ENCODE measurements at regions of chr16 and their contacts with region 1.

Region 1: GRCh38 chr16:51971184-51971583 is 575.8 kb downstream of the TOX3 start:
- DNase-seq: peak; percentile 68
- H3K4me3 ChIP-seq: no peak overlapping the region
- H3K27ac ChIP-seq: no peak overlapping the region
- H3K4me1 ChIP-seq: no peaks in the 10 kb centered on the region; a peak in 1 of 4 replicates
- H3K27me3 ChIP-seq: no peaks in the 10 kb centered on the region
- CTCF ChIP-seq: 0 out of 2 replicates have a peak, but pooled peaks have one; percentile 13
- EP300 ChIP-seq: no peak
- RAD21 ChIP-seq: peak; percentile 81

Region 2: DNA sequence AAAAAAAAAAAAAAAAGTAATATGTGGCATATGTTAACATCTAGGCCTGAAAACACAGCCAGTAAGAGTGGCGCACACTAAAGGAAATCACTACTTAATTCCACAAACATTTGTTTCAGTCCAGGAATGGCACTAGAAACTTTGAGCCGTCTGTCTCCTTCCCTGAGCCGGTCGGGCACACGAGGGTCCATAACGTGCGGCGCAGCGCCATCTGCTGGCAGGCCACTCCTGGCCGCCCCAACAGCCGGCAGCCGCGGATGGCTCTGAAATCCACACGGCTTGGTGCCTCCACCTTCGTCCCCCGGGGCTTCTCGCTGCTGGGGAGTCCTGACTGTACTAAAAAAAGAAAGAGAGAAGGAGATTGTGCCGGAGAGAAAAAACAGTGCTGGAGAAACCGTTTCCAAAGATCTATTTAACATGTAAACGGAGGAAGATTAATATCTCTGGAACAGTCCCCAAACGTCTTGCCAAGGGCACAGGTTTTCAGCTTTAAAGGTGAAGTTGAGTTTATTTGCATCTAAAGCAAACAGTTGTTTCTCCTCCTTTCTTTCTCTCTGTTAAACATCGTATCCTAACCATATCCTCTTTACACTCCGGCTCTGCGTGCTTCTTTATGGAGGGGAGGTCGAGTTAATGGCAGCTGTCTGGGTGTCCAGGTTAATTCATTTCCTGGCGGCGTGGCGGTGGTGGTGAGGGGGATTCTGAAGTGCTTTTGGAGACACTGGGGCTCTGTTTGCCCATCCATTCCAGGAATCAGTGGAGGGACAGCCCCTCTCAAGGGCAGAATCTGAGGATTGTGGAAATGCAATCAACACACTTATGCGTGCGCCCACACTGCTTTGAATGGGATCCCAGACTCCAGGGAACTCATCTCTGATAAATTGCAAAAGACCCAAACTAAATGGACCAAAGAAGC is 208.8 kb before region 1 on chr16:
- CTCF ChIA-PET with region 1: interaction called, 10 read pairs
- POLR2A ChIA-PET with region 1: no interaction called
- DNase-seq: peak; percentile 76
- H3K4me3 ChIP-seq: peak overlapping the region in 1 of 2 experiments; percentile 47; a peak in 1 of 4 replicates
- H3K27ac ChIP-seq: no peak overlapping the region
- H3K4me1 ChIP-seq: peaks cover 3 to 25% of the 10 kb centered on the region in 2 experiments; a peak in 3 of 4 replicates
- H3K27me3 ChIP-seq: no peaks in the 10 kb centered on the region
- CTCF ChIP-seq: peak; percentile 95
- EP300 ChIP-seq: no peak
- RAD21 ChIP-seq: peak; percentile 91

Region 3: GRCh38 chr16:51931653-51932052 is 39.5 kb before region 1 on chr16:
- CTCF ChIA-PET with region 1: interaction called, 11 read pairs
- POLR2A ChIA-PET with region 1: no interaction called
- DNase-seq: peak; percentile 32
- H3K4me3 ChIP-seq: no peak overlapping the region
- H3K27ac ChIP-seq: no peak overlapping the region
- H3K4me1 ChIP-seq: peaks cover 0 to 6% of the 10 kb centered on the region in 2 experiments; a peak in 2 of 4 replicates
- H3K27me3 ChIP-seq: no peaks in the 10 kb centered on the region
- CTCF ChIP-seq: no peak
- EP300 ChIP-seq: peak in 1 of 2 experiments; percentile 38; a peak in 1 of 4 replicates
- RAD21 ChIP-seq: no peak

Region 4: DNA sequence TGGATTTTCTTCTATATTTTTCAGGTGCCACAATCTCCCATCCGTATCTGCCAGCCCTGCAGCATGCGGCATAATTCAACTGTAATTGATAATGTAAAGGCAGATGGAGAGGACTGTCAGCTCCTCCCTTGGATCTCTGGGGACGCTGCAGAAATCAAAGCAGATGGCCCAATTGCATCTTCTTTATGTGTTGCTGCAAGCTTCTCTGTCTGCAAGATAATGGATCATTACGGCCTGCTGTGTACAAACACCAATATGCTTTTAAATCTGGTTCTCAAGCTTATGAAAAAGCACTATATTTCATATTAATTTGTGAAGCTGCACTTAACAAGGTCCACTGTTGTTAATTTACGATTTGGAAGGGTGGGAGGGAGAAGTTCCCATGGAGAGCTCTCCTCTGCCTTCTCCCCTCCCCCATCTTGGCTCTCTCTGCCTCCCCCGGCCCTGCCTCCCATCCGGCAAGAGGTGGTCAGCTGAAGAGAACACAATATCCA is 31.8 kb before region 1 on chr16:
- CTCF ChIA-PET with region 1: interaction called, 17 read pairs
- POLR2A ChIA-PET with region 1: interaction called, 3 read pairs
- DNase-seq: peak; percentile 68
- H3K4me3 ChIP-seq: no peak overlapping the region
- H3K27ac ChIP-seq: peak overlapping the region in 1 of 2 experiments; percentile 88; a peak in 2 of 4 replicates
- H3K4me1 ChIP-seq: peaks cover 0 to 19% of the 10 kb centered on the region in 2 experiments; a peak in 2 of 4 replicates
- H3K27me3 ChIP-seq: no peaks in the 10 kb centered on the region
- CTCF ChIP-seq: no peak
- EP300 ChIP-seq: peak in 1 of 2 experiments; percentile 93; a peak in 2 of 4 replicates
- RAD21 ChIP-seq: peak; percentile 27; the same call in 1 of the 2 replicates

Region 5: GRCh38 chr16:51951668-51952298 is 19.4 kb before region 1 on chr16:
- CTCF ChIA-PET with region 1: interaction called, 12 read pairs
- POLR2A ChIA-PET with region 1: no interaction called
- DNase-seq: no peak
- H3K4me3 ChIP-seq: no peak overlapping the region
- H3K27ac ChIP-seq: peak overlapping the region in 1 of 2 experiments; percentile 11; a peak in 1 of 4 replicates
- H3K4me1 ChIP-seq: peaks cover 0 to 26% of the 10 kb centered on the region in 2 experiments; a peak in 2 of 4 replicates
- H3K27me3 ChIP-seq: no peaks in the 10 kb centered on the region
- CTCF ChIP-seq: no peak
- EP300 ChIP-seq: no peak
- RAD21 ChIP-seq: no peak

Region 6: GRCh38 chr16:51982715-51983680 is 11.8 kb after region 1 on chr16:
- CTCF ChIA-PET with region 1: interaction called, 68 read pairs
- POLR2A ChIA-PET with region 1: no interaction called
- DNase-seq: peak; percentile 48
- H3K4me3 ChIP-seq: peak overlapping the region in 1 of 2 experiments; percentile 11; a peak in 1 of 4 replicates
- H3K27ac ChIP-seq: no peak overlapping the region
- H3K4me1 ChIP-seq: no peaks in the 10 kb centered on the region; a peak in 1 of 4 replicates
- H3K27me3 ChIP-seq: no peaks in the 10 kb centered on the region
- CTCF ChIP-seq: peak; percentile 78
- EP300 ChIP-seq: no peak
- RAD21 ChIP-seq: peak; percentile 97

Region 7: GRCh38 chr16:52050418-52050817 is 79.2 kb after region 1 on chr16:
- CTCF ChIA-PET with region 1: no interaction called
- POLR2A ChIA-PET with region 1: no interaction called
- DNase-seq: no peak
- H3K4me3 ChIP-seq: no peak overlapping the region
- H3K27ac ChIP-seq: no peak overlapping the region
- H3K4me1 ChIP-seq: no peaks in the 10 kb centered on the region
- H3K27me3 ChIP-seq: no peaks in the 10 kb centered on the region
- CTCF ChIP-seq: no peak
- EP300 ChIP-seq: no peak
- RAD21 ChIP-seq: no peak

Measured in SK-N-SH (cell line).